Gastrocnemius medialis (tissue), 4 donors: ENCODE measurements at regions of chr14 and their contacts with region 1.

Region 1: GRCh38 chr14:36661756-36662498 is at the start of gene PAX9:
- DNase-seq: peak; percentile 48 to 63
- ATAC-seq: peak; percentile 90 to 92
- H3K4me3 ChIP-seq: peak within 1 kb of the TSS; percentile 27 to 51 (median 44)
- H3K27ac ChIP-seq: no peak within 1 kb of the TSS
- H3K4me1 ChIP-seq: peaks cover 25 to 47% of the 10 kb centered on the region in 2 donors
- H3K27me3 ChIP-seq: peaks cover 96 to 100% (median 100%) of the 10 kb centered on the region in 3 donors
- CTCF ChIP-seq: no peak
- POLR2A ChIP-seq: no peak
- total RNA-seq, gene PAX9: not detected

Region 2: GRCh38 chr14:37623423-37623951 is 961.6 kb after region 1 on chr14:
- in situ Hi-C with region 1: loop called in 1 of 4 experiments (anchors 25 kb)
- intact Hi-C with region 1: no loop called
- DNase-seq: no peak
- ATAC-seq: no peak
- H3K4me3 ChIP-seq: no peak overlapping the region
- H3K27ac ChIP-seq: no peak overlapping the region
- H3K4me1 ChIP-seq: no peaks in the 10 kb centered on the region
- H3K27me3 ChIP-seq: peaks cover 30 to 38% (median 35%) of the 10 kb centered on the region in 3 donors
- CTCF ChIP-seq: no peak
- POLR2A ChIP-seq: no peak